Posterior cingulate gyrus (tissue), 11 donors: ENCODE measurements at regions of chr17 and their contacts with region 1.

Region 1: GRCh38 chr17:63621766-63622519 is at the start of gene MAP3K3:
- DNase-seq: peak; percentile 99 to 100 (median 100)

Region 2: GRCh38 chr17:63549946-63550807 is 71.8 kb before region 1 on chr17 and contains the start of gene DCAF7:
- intact Hi-C with region 1: loop called (anchors 5 kb)
- DNase-seq: peak; percentile 99 to 100 (median 99)

Region 3: DNA sequence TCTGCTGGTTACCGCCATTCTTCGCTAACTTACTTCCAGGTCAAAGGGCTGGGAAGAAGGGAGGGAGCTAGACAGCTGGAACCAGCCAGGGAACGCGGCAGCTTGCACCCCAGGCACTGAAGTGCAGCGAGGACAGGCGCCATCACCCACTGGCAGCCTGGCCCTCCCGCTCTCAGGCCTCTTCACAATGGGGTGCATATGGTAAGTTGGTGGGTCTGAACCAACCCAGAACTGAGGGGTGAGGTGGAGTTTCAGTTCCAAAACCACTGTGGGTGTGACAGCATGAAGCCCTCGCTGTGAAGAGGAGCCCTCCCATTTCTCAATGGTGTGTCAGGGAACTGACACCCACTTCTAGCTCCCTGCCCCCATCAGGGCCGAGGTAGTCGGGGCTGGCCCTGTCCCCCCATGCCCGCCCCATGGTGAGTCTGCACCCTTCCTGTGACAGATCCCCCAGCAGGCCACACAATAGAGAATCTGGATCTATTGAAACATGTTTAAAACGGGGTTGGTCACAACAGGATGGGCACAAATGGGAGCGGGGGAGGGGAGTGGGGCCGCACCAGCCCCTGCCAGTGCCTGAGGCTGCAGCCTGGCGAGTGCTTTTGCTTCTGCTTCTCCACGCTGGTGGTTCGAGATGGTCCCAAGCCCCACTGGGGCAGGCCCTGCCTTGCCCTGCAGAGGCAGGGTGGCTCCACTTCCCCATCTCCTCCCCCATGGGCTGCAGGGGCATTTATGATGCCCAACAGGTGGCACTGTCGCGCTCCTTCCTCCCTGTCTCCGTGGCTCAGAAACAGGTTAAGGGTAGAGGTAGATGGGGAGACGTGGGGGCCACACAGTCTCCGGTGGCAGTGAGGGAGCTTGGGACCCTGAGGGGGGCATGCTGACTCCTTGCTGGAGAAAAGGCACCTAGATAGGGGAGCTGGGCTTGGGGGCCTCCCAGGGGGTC is 75.7 kb after region 1 on chr17:
- intact Hi-C with region 1: loop called (anchors 5 kb)
- DNase-seq: peak in 1 of 10 donors; percentile 81

Region 4: GRCh38 chr17:63773381-63774140 is 151.6 kb after region 1 on chr17 and contains the start of gene CCDC47:
- intact Hi-C with region 1: loop called (anchors 10 kb)
- DNase-seq: peak; percentile 99 to 100 (median 100)

Region 5: GRCh38 chr17:63842540-63843386 is 220.8 kb after region 1 on chr17 and contains the start of gene SMARCD2:
- intact Hi-C with region 1: loop called (anchors 5 kb)
- DNase-seq: peak; percentile 93 to 100 (median 98)